Aorta (tissue), 5 donors: ENCODE measurements at regions of chr14 and their contacts with region 1.

Region 1: DNA sequence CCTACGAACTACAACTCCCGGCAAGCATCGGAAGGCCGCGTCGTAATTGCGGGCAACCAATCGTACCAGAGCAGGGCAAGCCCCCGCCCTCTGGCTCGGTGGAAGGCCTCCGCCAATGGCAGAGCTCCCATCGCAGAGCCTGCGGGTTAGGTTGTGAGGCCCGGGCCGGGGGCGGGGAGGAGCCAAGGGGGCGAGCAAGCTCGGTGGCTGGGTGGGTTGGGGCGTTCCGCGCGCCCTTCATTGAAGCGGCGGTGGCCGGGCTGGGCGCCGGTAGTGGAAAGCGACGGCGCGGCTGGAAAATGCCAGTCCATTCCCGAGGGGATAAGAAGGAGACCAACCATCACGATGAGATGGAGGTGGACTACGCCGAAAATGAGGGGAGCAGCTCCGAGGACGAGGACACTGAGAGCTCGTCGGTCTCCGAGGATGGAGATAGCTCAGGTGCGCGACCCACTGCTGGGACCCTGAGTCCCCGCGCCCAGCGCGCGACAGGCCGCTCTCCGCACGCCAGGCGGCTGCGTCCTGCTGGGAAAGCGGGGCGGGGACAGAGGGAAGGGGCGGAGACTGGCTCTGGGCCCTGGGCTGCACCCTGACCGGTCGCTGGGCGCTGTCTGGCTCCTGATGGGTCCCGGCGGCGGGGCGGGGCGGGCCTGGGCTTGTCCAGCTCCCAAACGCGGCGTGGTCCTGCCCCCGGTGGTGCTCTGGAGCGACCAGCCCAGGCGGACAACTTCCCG is at the start of gene BRMS1L:
- DNase-seq: peak; percentile 99
- ATAC-seq: peak; percentile 100
- H3K4me3 ChIP-seq: peak within 1 kb of the TSS; percentile 48 to 78
- H3K27ac ChIP-seq: peak within 1 kb of the TSS; percentile 64 to 90
- H3K4me1 ChIP-seq: no peaks in the 10 kb centered on the region
- H3K27me3 ChIP-seq: no peaks in the 10 kb centered on the region
- total RNA-seq, gene BRMS1L: 13.4 to 14.9 TPM

Region 2: GRCh38 chr14:35678403-35679028 is 147.9 kb before region 1 on chr14:
- intact Hi-C with region 1: no loop called
- DNase-seq: no peak
- ATAC-seq: no peak
- H3K4me3 ChIP-seq: no peak overlapping the region
- H3K27ac ChIP-seq: no peak overlapping the region
- H3K4me1 ChIP-seq: no peaks in the 10 kb centered on the region
- H3K27me3 ChIP-seq: no peaks in the 10 kb centered on the region

Region 3: GRCh38 chr14:35867273-35867629 is 40.9 kb after region 1 on chr14:
- intact Hi-C with region 1: loop called in 1 of 2 experiments (anchors 5 kb)
- DNase-seq: no peak
- ATAC-seq: no peak
- H3K4me3 ChIP-seq: no peak overlapping the region
- H3K27ac ChIP-seq: peak overlapping the region in 1 of 2 donors; percentile 70
- H3K4me1 ChIP-seq: no peaks in the 10 kb centered on the region
- H3K27me3 ChIP-seq: no peaks in the 10 kb centered on the region

Region 4: DNA sequence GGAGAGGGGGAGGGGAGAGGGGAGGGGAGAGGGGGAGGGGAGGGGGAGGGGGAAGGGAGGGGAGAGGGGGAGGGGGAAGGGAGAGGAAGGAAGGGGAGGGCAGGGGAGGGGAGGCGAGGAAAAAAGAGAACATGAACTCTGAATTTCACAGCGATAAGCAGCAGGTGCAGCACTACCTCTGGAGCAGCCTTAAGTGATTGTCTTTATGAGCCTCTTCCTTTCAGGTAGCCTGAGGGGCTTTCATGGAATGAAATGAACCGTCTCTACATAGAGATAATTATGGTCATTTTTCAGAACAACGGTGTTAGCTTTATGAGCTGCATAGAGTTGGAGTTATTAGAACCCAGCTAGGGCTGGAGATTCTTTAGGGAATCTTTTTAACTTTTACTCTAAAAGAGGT is 368.3 kb after region 1 on chr14:
- intact Hi-C with region 1: no loop called
- DNase-seq: no peak
- ATAC-seq: no peak
- H3K4me3 ChIP-seq: no peak overlapping the region
- H3K27ac ChIP-seq: no peak overlapping the region
- H3K4me1 ChIP-seq: no peaks in the 10 kb centered on the region
- H3K27me3 ChIP-seq: no peaks in the 10 kb centered on the region

Region 5: GRCh38 chr14:36361210-36361853 is 534.9 kb after region 1 on chr14:
- intact Hi-C with region 1: no loop called
- DNase-seq: no peak
- ATAC-seq: no peak
- H3K4me3 ChIP-seq: no peak overlapping the region
- H3K27ac ChIP-seq: no peak overlapping the region
- H3K4me1 ChIP-seq: no peaks in the 10 kb centered on the region
- H3K27me3 ChIP-seq: no peaks in the 10 kb centered on the region